Naive thymus-derived CD4-positive, alpha-beta T cell (primary cell): ENCODE measurements at regions of chr3 and their contacts with region 1.

Region 1: GRCh38 chr3:4466741-4467521 is at the start of gene SUMF1:
- DNase-seq: peak; percentile 59 to 79 (median 70)
- ATAC-seq: peak; percentile 98
- H3K4me3 ChIP-seq: peak within 1 kb of the TSS; percentile 90
- H3K4me3 Mint-ChIP-seq: peak within 1 kb of the TSS; percentile 90 to 95 (median 92)
- H3K27ac ChIP-seq: peak within 1 kb of the TSS; percentile 77
- H3K27ac Mint-ChIP-seq: peak within 1 kb of the TSS; percentile 86 to 96 (median 94)
- H3K4me1 ChIP-seq: peaks cover 5 to 7% of the 10 kb centered on the region in 2 donors
- H3K4me1 Mint-ChIP-seq: peaks cover 12 to 38% (median 21%) of the 10 kb centered on the region in 7 donors
- H3K27me3 ChIP-seq: no peaks in the 10 kb centered on the region
- H3K27me3 Mint-ChIP-seq: peaks cover 0 to 2% (median under 1%) of the 10 kb centered on the region in 5 donors
- total RNA-seq, gene SUMF1: 9.2 to 20.0 (median 16.0) TPM

Region 2: GRCh38 chr3:4303187-4304123 is 163.5 kb before region 1 on chr3 and contains the start of gene SETMAR:
- CTCF ChIA-PET with region 1: no interaction called
- POLR2A ChIA-PET with region 1: interaction called, 3 read pairs
- intact Hi-C with region 1: loop called (anchors 1 kb)
- DNase-seq: peak; percentile 73 to 86 (median 82)
- ATAC-seq: peak; percentile 97
- H3K4me3 ChIP-seq: peak within 1 kb of the TSS; percentile 92
- H3K4me3 Mint-ChIP-seq: peak within 1 kb of the TSS; percentile 88 to 99 (median 97)
- H3K27ac ChIP-seq: peak within 1 kb of the TSS; percentile 91
- H3K27ac Mint-ChIP-seq: peak within 1 kb of the TSS; percentile 92 to 99 (median 98)
- H3K4me1 ChIP-seq: peaks cover 0 to 8% of the 10 kb centered on the region in 2 donors
- H3K4me1 Mint-ChIP-seq: peaks cover 8 to 45% (median 34%) of the 10 kb centered on the region in 7 donors
- H3K27me3 ChIP-seq: no peaks in the 10 kb centered on the region
- H3K27me3 Mint-ChIP-seq: no peaks in the 10 kb centered on the region
- total RNA-seq, gene SETMAR: 6.4 to 13.7 (median 12.5) TPM